ENCODE measurements at regions of chr5 and their contacts with region 1.

Region 1: GRCh38 chr5:32709781-32710549 is 1.2 kb upstream of the NPR3 start:
- DNase-seq: peak; percentile 89

Region 2: GRCh38 chr5:32690153-32690552 is 19.8 kb before region 1 on chr5:
- intact Hi-C with region 1: no loop called
- DNase-seq: no peak

Region 3: GRCh38 chr5:32734827-32735378 is 24.9 kb after region 1 on chr5:
- intact Hi-C with region 1: loop called in 1 of 2 experiments (anchors 2 kb)
- DNase-seq: no peak

Region 4: DNA sequence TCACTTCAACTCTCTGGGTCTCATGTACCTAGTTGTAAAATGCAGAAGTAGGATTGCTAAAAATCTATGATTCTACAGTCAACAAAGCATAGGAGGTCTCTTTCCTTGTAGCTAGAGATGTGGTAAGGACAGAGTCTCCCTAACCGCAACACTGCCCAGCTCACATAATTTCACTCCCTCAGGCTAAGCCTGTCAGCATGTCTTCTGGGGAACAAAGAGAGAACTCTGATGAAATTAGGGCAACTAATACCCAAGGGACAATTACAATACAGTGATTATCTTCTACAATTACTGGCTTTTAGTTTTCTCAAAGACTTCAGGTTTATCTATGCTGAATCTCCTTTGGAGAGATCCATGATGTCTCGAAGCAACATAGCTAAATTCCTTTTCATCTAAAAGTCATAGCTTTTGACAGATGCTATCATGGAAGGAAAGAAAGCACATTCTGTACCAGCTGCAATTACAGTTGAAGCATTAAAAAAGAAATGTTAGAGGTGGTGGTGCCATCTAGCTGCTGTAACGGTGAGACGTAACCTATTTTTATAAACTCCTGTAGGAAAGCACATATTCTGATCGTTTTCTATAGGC is 589.8 kb after region 1 on chr5:
- intact Hi-C with region 1: loop called in 1 of 2 experiments (anchors 10 kb)
- DNase-seq: no peak

Region 5: DNA sequence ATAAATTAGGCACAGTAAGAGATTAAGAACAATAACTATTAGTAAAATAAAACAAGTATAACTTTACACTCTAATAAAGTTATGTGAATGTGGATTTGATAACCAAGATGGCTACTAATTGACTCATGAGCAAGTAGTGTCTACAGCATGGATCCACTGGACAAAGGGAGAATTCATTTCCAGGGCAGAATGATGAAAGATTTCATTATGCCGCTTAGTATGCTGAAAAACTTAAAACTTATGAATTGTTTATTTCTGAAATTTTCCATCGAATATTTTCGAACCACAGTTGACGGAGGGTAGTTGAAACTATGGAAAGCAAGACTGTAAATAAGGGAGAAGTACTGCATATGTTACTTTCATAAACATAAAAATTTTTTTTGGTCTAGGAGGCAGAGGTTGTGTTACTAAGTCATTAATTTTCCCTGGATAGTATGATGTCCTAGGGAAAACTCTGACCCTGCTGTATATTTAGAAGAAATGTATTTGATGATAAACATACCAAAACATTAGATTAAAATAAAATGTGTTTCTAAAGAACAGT is 705.9 kb after region 1 on chr5:
- intact Hi-C with region 1: loop called in 1 of 2 experiments (anchors 5 kb)
- DNase-seq: no peak